ENCODE measurements at regions of chr1 and their contacts with region 1.

Region 1: GRCh38 chr1:211260141-211261107 is 1.3 kb downstream of the RCOR3 start:
- DNase-seq: peak; percentile 81 to 84
- ATAC-seq: peak; percentile 27 to 67 (median 56)
- H3K4me3 ChIP-seq: peak overlapping the region; percentile 58 to 98 (median 92)
- H3K27ac ChIP-seq: peak overlapping the region; percentile 92 to 99 (median 99)
- H3K4me1 ChIP-seq: peaks cover 0 to 32% (median 28%) of the 10 kb centered on the region in 9 donors
- H3K27me3 ChIP-seq: no peaks in the 10 kb centered on the region
- CTCF ChIP-seq: no peak

Region 2: DNA sequence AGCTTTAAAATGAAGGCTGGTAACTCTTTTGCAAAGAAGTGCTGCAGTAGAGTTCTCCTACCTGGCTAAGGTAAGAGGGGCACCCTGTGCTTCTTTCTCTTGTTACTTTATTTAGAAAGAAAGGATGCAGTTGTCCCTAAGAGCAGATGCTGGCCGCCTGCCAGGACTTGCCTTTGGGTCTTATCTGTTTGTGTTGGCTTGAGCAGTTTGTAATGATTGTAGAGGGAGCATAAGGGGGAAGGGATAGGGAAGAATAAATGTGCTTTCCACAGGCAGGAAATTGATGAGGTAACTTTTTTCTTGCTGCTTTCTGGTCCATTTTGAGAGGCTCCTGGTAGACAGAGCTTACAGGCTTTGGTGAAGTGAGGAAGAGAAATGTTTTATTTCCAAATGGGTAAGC is 702.1 kb before region 1 on chr1:
- intact Hi-C with region 1: no loop called
- DNase-seq: peak; percentile 45 to 60
- ATAC-seq: peak in 5 of 8 donors; percentile 54 to 68 (median 61)
- H3K4me3 ChIP-seq: no peak overlapping the region
- H3K27ac ChIP-seq: no peak overlapping the region
- H3K4me1 ChIP-seq: peaks cover 0 to 12% (median 10%) of the 10 kb centered on the region in 9 donors
- H3K27me3 ChIP-seq: no peaks in the 10 kb centered on the region
- CTCF ChIP-seq: no peak

Region 3: GRCh38 chr1:211305044-211305443 is 44.6 kb after region 1 on chr1:
- intact Hi-C with region 1: loop called in 1 of 10 experiments (anchors 5 kb)
- DNase-seq: peak in 1 of 2 donors; percentile 24
- ATAC-seq: peak in 7 of 8 donors; percentile 25 to 91 (median 77)
- H3K4me3 ChIP-seq: no peak overlapping the region
- H3K27ac ChIP-seq: peak overlapping the region in 5 of 10 donors; percentile 22 to 62 (median 45)
- H3K4me1 ChIP-seq: peaks cover 0 to 34% (median 10%) of the 10 kb centered on the region in 9 donors
- H3K27me3 ChIP-seq: no peaks in the 10 kb centered on the region
- CTCF ChIP-seq: no peak

Measured in heart right ventricle (tissue), 16 donors.